ENCODE measurements at regions of chr14 and their contacts with region 1.

Region 1: GRCh38 chr14:24710403-24711112 is 76.6 kb upstream of the GZMB start:
- DNase-seq: peak; percentile 26 to 53 (median 47)
- H3K4me3 ChIP-seq: no peak overlapping the region
- H3K4me3 Mint-ChIP-seq: no peak overlapping the region
- H3K27ac ChIP-seq: no peak overlapping the region
- H3K27ac Mint-ChIP-seq: peak overlapping the region in 1 of 7 donors; percentile 49
- H3K4me1 ChIP-seq: peaks cover 4% of the 10 kb centered on the region
- H3K4me1 Mint-ChIP-seq: no peaks in the 10 kb centered on the region
- H3K27me3 ChIP-seq: no peaks in the 10 kb centered on the region
- H3K27me3 Mint-ChIP-seq: peaks cover 2 to 6% of the 10 kb centered on the region in 2 donors

Region 2: DNA sequence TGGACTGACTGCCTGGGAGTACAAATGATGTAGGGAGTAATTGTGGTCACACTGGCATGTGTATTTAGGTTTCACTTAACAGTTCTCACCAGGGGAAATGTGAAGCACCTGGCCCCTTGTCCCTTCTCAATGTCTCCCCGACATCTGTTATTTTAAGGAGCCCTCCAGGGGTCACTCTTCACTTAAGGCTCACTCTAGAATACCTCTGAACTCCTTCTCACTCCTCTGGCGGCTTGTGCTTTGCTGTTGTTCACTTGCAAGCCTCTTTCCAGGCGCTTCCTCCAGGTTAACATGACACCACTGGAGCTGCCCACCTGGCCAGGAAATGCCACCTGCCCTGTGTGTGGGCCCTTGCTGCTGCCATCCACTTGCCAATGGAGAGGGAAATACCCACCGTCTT is 20.1 kb before region 1 on chr14:
- CTCF ChIA-PET with region 1: interaction called, 11 read pairs
- POLR2A ChIA-PET with region 1: interaction called, 9 read pairs
- intact Hi-C with region 1: loop called (anchors 2 kb)
- DNase-seq: no peak
- H3K4me3 ChIP-seq: no peak overlapping the region
- H3K4me3 Mint-ChIP-seq: no peak overlapping the region
- H3K27ac ChIP-seq: no peak overlapping the region
- H3K27ac Mint-ChIP-seq: no peak overlapping the region
- H3K4me1 ChIP-seq: peaks cover 37% of the 10 kb centered on the region
- H3K4me1 Mint-ChIP-seq: peaks cover 11 to 17% (median 14%) of the 10 kb centered on the region in 4 donors
- H3K27me3 ChIP-seq: no peaks in the 10 kb centered on the region
- H3K27me3 Mint-ChIP-seq: no peaks in the 10 kb centered on the region

Region 3: GRCh38 chr14:24699052-24699451 is 11.5 kb before region 1 on chr14:
- CTCF ChIA-PET with region 1: interaction called, 27 read pairs
- POLR2A ChIA-PET with region 1: interaction called, 3 read pairs
- intact Hi-C with region 1: no loop called
- DNase-seq: no peak
- H3K4me3 ChIP-seq: no peak overlapping the region
- H3K4me3 Mint-ChIP-seq: no peak overlapping the region
- H3K27ac ChIP-seq: no peak overlapping the region
- H3K27ac Mint-ChIP-seq: no peak overlapping the region
- H3K4me1 ChIP-seq: peaks cover 32% of the 10 kb centered on the region
- H3K4me1 Mint-ChIP-seq: peaks cover 6 to 12% (median 7%) of the 10 kb centered on the region in 4 donors
- H3K27me3 ChIP-seq: no peaks in the 10 kb centered on the region
- H3K27me3 Mint-ChIP-seq: no peaks in the 10 kb centered on the region

Region 4: DNA sequence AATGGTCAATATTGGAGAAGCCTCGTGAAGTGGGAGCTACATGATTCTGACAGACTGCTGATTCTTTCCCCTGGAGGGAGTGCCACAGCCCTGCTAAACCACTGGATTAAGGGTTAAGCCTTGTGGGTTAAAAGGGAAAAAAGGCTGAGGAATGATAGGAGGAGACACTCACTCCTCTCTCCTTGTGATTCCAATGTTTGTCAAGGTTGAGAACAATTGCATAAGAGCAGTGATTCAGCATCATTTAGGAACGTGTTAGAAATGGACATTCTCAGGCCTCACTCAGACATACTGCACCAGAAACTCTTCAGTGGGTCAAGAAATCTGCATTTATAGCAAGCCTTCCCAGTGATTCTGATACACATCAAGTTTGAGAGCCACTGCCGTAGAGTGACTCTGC is 11.2 kb after region 1 on chr14:
- CTCF ChIA-PET with region 1: interaction called, 27 read pairs
- POLR2A ChIA-PET with region 1: no interaction called
- intact Hi-C with region 1: no loop called
- DNase-seq: no peak
- H3K4me3 ChIP-seq: no peak overlapping the region
- H3K4me3 Mint-ChIP-seq: no peak overlapping the region
- H3K27ac ChIP-seq: no peak overlapping the region
- H3K27ac Mint-ChIP-seq: no peak overlapping the region
- H3K4me1 ChIP-seq: no peaks in the 10 kb centered on the region
- H3K4me1 Mint-ChIP-seq: no peaks in the 10 kb centered on the region
- H3K27me3 ChIP-seq: no peaks in the 10 kb centered on the region
- H3K27me3 Mint-ChIP-seq: peaks cover 7 to 14% of the 10 kb centered on the region in 2 donors